ENCODE measurements at regions of chr5 and their contacts with region 1.

Region 1: DNA sequence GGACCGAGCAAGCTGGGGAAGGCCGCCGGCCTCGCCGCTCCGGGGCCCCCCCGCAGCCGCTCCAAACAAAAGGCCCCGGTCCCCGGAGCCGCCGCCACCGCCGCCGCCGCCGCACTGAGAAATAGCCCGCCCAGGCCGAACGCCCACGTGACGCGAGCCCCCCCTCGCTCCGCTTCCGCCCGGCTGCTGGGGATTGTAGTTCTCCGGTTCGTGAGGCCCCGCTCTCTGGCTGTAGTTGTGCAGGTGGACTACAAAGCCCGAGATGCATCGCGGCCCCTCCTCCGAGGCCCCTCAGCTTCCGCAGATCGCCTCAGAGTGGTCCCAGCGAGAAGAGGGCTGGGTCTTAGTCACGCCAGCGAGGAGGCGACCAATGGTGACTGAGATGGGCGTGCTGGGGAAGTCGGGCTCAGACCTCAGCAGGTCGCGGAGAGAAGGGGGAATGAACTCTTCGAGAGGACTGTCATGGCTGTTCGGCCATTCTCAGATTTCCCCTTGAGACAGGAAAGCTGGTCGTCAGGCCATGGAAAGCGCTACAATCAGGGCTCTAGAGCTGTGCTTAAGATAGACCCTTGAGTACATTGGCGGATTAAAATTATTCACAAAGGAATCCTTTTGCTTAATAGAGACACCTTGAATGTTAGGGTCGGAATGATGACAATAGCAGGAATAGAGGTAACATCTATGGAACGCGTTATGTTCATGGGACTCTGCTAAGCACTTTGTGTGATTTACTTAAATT is 489 bp upstream of the PANK3 start:
- DNase-seq: peak; percentile 100
- H3K4me3 Mint-ChIP-seq: peak overlapping the region; percentile 83
- H3K27ac Mint-ChIP-seq: peak overlapping the region; percentile 96
- H3K4me1 Mint-ChIP-seq: peaks cover 28% of the 10 kb centered on the region
- H3K27me3 Mint-ChIP-seq: no peaks in the 10 kb centered on the region
- CTCF ChIP-seq: no peak

Region 2: GRCh38 chr5:168086104-168086610 is 493.5 kb before region 1 on chr5:
- CTCF ChIA-PET with region 1: no interaction called
- POLR2A ChIA-PET with region 1: no interaction called
- intact Hi-C with region 1: no loop called
- DNase-seq: peak; percentile 84
- H3K4me3 Mint-ChIP-seq: peak overlapping the region; percentile 22
- H3K27ac Mint-ChIP-seq: no peak overlapping the region
- H3K4me1 Mint-ChIP-seq: peaks cover 9% of the 10 kb centered on the region
- H3K27me3 Mint-ChIP-seq: no peaks in the 10 kb centered on the region
- CTCF ChIP-seq: peak; percentile 5

Region 3: DNA sequence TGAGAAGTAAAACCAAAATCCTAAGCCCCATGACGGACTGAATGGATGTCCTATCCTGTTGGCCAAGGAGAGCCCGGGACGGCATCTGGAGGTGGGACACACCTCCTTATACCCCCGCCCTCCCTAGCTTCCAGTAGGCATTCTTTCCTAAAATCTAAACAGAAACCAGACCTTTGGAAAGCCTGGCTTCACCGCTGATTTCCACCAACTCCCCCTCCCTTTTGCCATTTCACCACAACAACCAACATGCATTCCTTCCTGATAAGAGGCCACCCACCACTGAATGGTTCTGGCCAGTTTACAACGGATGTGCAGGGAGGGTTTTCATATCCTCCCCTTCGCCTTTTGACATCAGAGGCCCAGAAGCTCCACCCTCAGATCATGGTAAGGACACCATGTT is 102.6 kb before region 1 on chr5:
- CTCF ChIA-PET with region 1: no interaction called
- POLR2A ChIA-PET with region 1: no interaction called
- intact Hi-C with region 1: no loop called
- DNase-seq: no peak
- H3K4me3 Mint-ChIP-seq: no peak overlapping the region
- H3K27ac Mint-ChIP-seq: no peak overlapping the region
- H3K4me1 Mint-ChIP-seq: peaks cover 10% of the 10 kb centered on the region
- H3K27me3 Mint-ChIP-seq: no peaks in the 10 kb centered on the region
- CTCF ChIP-seq: no peak

Region 4: DNA sequence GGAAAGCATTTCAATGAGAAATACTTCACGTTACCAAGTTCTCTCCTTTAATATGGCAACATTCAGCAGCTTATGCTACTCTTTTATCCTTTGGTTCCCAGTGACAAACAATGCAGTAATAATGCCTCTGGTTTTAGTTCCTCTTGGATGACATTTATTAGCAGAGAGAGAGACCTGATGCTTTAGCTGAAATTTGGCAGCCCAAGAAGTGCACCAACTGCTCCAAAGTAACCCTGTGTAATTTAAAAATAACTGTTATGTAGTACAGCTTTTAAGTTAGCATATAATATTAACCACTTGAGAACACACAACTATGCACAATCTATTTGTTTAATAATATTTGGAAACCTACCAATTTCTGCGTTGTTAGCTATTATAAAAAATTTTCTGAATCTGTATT is 22.3 kb before region 1 on chr5:
- CTCF ChIA-PET with region 1: no interaction called
- POLR2A ChIA-PET with region 1: interaction called, 10 read pairs
- intact Hi-C with region 1: no loop called
- DNase-seq: no peak
- H3K4me3 Mint-ChIP-seq: no peak overlapping the region
- H3K27ac Mint-ChIP-seq: no peak overlapping the region
- H3K4me1 Mint-ChIP-seq: peaks cover 17% of the 10 kb centered on the region
- H3K27me3 Mint-ChIP-seq: no peaks in the 10 kb centered on the region
- CTCF ChIP-seq: no peak

Region 5: DNA sequence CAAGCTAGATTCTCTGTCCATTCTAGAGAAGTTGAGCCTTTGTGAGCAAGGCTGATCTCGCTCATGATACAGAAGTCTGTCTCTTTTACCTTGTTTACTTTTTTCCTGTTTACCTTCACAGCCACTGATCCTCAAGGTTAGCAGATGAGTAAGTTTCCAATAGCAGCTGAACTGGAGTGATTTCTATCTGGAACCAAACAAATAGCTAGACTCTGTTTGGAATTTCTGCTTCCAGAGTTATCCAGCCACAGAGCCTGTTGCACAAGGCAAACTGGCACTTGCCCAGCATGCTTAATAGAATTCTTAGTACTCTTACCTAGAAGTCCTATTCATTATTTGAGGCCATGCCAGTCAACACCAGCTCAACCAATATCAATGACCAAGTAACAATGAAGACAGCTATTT is 12.4 kb after region 1 on chr5:
- CTCF ChIA-PET with region 1: no interaction called
- POLR2A ChIA-PET with region 1: interaction called, 45 read pairs
- intact Hi-C with region 1: no loop called
- DNase-seq: peak; percentile 59
- H3K4me3 Mint-ChIP-seq: no peak overlapping the region
- H3K27ac Mint-ChIP-seq: no peak overlapping the region
- H3K4me1 Mint-ChIP-seq: peaks cover 5% of the 10 kb centered on the region
- H3K27me3 Mint-ChIP-seq: peaks cover 20% of the 10 kb centered on the region
- CTCF ChIP-seq: no peak

Region 6: DNA sequence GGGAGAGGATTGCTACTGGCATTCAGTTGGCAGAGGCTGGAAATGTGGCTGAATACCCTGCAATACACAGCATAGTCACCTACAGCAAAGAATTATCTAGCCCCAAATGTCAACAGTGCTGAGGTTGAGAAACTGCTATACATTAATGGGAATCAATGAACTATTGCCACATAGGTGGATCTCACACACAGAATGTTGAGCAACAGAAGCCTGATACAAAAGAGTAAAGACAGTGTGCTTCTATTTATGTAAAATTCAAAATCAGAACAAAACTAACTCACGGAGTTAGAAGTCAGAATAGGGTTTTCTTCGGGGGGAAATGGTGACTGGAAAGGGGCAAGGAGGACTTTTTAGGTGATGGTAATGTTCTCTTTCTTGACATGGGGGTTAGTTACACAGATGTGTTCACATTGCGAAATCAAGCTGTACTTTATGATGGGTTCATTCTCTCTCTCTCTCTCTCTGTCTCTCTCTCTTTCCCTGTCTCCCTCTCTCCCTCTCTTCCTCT is 45.2 kb after region 1 on chr5:
- CTCF ChIA-PET with region 1: no interaction called
- POLR2A ChIA-PET with region 1: interaction called, 11 read pairs
- intact Hi-C with region 1: no loop called
- DNase-seq: peak; percentile 91
- H3K4me3 Mint-ChIP-seq: peak overlapping the region; percentile 4
- H3K27ac Mint-ChIP-seq: peak overlapping the region; percentile 16
- H3K4me1 Mint-ChIP-seq: peaks cover 23% of the 10 kb centered on the region
- H3K27me3 Mint-ChIP-seq: peaks cover 4% of the 10 kb centered on the region
- CTCF ChIP-seq: no peak

Region 7: DNA sequence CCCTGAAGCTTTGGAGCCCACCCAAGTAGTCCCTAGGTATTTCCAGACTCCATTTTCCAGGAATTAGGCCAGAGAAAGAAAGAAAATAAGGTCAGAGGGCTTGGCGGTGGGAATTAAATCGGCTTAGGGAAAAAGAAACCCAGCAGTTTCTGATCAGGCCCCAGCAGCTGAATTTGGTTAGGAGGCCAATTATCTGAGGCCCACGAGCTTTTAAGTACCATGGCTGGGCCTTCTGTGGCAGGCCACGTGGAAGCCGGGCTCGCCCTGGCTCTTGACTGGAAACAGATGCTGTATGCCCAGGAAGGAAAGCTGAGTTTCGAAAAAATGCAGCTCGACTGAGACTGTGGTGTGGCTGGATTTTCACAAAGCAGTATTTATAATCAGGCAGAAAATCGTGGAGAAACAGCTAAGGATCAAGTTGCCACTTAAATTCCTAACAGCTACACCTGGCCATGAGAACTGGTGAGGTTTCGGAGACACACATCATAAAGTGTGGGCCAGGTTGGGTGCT is 74.6 kb after region 1 on chr5:
- CTCF ChIA-PET with region 1: interaction called, 5 read pairs
- POLR2A ChIA-PET with region 1: interaction called, 72 read pairs
- intact Hi-C with region 1: loop called (anchors 1 kb)
- DNase-seq: no peak
- H3K4me3 Mint-ChIP-seq: no peak overlapping the region
- H3K27ac Mint-ChIP-seq: no peak overlapping the region
- H3K4me1 Mint-ChIP-seq: peaks cover 44% of the 10 kb centered on the region
- H3K27me3 Mint-ChIP-seq: no peaks in the 10 kb centered on the region
- CTCF ChIP-seq: no peak

Region 8: DNA sequence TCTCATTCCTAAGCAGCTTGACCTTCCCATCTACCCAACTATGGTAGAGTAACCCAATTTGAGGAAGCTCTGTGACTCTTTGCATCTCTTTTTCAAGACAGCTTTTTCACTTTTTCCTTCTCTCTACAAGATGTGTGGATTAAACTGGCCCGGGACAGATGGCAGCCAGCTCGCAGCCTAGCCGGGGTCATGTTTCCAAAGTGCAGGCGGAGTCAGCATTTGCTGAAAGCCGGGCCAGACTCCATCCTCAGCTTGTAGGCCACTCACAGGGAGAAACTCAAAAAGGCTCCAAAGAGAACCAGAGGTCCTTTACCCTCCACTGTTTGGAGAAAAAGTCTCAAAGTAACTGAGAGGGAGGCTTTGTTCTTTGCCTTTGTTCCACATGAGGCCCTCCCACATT is 286.3 kb after region 1 on chr5:
- CTCF ChIA-PET with region 1: no interaction called
- POLR2A ChIA-PET with region 1: no interaction called
- intact Hi-C with region 1: no loop called
- DNase-seq: no peak
- H3K4me3 Mint-ChIP-seq: no peak overlapping the region
- H3K27ac Mint-ChIP-seq: no peak overlapping the region
- H3K4me1 Mint-ChIP-seq: no peaks in the 10 kb centered on the region
- H3K27me3 Mint-ChIP-seq: no peaks in the 10 kb centered on the region
- CTCF ChIP-seq: no peak